CD4-positive, alpha-beta memory T cell (primary cell): ENCODE measurements at regions of chr13 and their contacts with region 1.

Region 1: GRCh38 chr13:41054212-41054877 is 7.0 kb upstream of the WBP4 start:
- DNase-seq: peak; percentile 50 to 60 (median 56)
- H3K4me3 ChIP-seq: no peak overlapping the region
- H3K4me3 Mint-ChIP-seq: peak overlapping the region in 3 of 8 donors; percentile 27 to 73 (median 31)
- H3K27ac ChIP-seq: no peak overlapping the region
- H3K27ac Mint-ChIP-seq: peak overlapping the region in 4 of 7 donors; percentile 8 to 40 (median 22)
- H3K4me1 ChIP-seq: peaks cover 32% of the 10 kb centered on the region
- H3K4me1 Mint-ChIP-seq: peaks cover 30 to 50% (median 35%) of the 10 kb centered on the region in 4 donors
- H3K27me3 ChIP-seq: no peaks in the 10 kb centered on the region
- H3K27me3 Mint-ChIP-seq: no peaks in the 10 kb centered on the region

Region 2: DNA sequence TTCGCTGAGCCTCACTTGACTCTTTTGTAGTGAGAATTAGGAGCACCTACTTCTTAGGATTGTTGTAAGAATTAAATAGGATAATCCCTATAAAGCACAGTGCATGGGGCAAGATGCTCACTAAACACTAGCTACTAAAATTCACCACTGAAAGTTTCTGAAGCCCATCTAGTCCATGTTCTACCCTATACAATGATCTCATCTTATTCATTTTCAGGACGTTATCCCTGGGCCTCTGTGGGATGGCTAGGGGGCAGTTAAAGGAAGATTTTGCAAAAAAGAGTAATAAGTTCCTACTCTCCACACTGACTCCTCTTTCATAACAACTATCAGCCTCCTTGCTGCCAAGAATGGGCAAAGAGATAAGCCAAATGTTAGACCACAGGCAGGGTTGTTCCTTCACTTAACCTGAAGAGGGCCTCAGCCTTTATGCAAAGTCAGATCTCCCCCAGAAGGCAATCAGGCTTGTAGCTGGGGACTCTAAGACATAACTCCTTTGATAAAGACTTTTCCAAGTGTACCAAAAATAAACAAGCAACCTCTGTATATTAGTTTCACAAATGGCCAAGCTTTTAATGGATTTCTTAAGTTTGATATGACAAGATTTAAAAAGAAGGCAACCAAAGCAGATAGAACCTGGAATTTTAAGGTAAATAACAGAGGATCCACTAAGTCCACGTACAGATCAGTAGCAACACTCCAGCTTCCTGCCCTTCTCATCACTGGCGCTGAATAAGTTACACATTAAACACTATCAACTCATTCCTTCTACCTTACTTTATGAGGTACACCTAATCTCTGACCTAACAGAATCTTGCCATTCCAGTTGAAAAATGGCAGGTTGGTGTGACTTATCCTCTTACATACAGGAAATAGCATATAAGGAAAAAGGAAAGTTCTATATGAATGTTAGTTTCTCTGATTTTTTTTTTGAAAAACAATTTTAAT is 79.6 kb before region 1 on chr13:
- CTCF ChIA-PET with region 1: interaction called, 30 read pairs
- POLR2A ChIA-PET with region 1: interaction called, 48 read pairs
- intact Hi-C with region 1: loop called (anchors 1 kb)
- DNase-seq: peak; percentile 54 to 75 (median 61)
- H3K4me3 ChIP-seq: no peak overlapping the region
- H3K4me3 Mint-ChIP-seq: peak overlapping the region; percentile 43 to 97 (median 78)
- H3K27ac ChIP-seq: peak overlapping the region; percentile 19
- H3K27ac Mint-ChIP-seq: peak overlapping the region; percentile 84 to 98 (median 86)
- H3K4me1 ChIP-seq: peaks cover 85% of the 10 kb centered on the region
- H3K4me1 Mint-ChIP-seq: peaks cover 68 to 94% (median 80%) of the 10 kb centered on the region in 4 donors
- H3K27me3 ChIP-seq: no peaks in the 10 kb centered on the region
- H3K27me3 Mint-ChIP-seq: no peaks in the 10 kb centered on the region

Region 3: DNA sequence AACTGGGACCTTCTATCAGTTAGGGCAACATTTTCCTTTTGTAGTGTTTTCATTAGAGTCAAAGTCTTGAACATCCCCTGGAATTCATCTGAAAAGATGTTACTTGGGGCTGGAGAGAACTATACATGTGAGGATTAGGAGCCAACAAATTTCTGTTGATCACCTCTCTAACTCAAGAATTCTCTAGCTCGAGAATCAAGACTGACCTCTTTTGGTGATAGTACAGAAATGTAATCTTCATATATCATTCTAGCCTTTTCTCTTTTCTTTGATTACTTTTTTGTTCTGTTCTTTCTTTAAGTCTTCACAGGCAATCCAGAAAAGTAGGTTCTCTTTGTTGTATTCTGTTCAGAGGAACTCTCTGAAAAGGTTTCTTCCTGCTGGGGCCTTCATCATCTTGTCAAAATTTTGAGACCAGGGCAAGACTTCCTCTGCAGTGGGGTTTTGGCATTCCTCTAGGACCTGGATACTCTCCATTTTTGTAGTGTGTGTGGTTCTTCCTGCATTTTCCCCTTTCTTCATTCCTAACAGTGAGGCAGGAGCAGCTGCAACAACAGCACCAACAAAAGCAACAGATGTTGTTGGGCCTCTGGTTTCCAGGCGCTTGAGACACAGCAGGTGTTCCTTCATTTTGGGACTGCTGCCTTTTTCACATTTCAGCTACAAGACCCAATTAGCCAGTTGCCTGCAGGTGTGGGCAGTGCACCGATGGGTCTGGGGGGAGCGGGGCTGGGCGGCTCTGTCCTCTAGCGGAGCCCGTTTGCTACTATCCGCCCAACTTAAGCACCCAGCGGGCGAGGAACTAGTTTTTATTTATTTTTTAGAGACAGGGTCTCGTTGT is 61.4 kb before region 1 on chr13:
- CTCF ChIA-PET with region 1: interaction called, 12 read pairs
- POLR2A ChIA-PET with region 1: no interaction called
- intact Hi-C with region 1: no loop called
- DNase-seq: no peak
- H3K4me3 ChIP-seq: no peak overlapping the region
- H3K4me3 Mint-ChIP-seq: peak overlapping the region in 6 of 8 donors; percentile 9 to 65 (median 35)
- H3K27ac ChIP-seq: peak overlapping the region; percentile 41
- H3K27ac Mint-ChIP-seq: peak overlapping the region; percentile 65 to 94 (median 85)
- H3K4me1 ChIP-seq: peaks cover 93% of the 10 kb centered on the region
- H3K4me1 Mint-ChIP-seq: peaks cover 54 to 87% (median 69%) of the 10 kb centered on the region in 4 donors
- H3K27me3 ChIP-seq: no peaks in the 10 kb centered on the region
- H3K27me3 Mint-ChIP-seq: no peaks in the 10 kb centered on the region

Region 4: DNA sequence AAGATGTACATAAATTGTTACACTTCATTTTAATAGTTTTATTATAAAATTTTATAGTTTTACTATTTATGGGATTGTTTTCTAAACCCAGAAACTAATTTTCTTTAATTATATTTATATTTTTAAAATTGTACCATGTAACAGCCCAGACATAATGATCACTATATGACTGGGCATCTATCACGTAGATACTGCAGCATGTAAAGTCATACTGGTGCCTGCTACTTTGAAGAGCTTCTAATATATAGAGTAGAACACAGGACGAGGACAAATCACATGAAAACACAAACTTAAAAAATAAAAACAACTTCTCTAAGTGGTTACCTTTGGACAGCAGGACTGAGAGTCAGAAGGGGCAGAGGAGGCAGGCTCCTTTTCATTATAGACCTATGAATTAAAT is 40.5 kb before region 1 on chr13:
- CTCF ChIA-PET with region 1: interaction called, 48 read pairs
- POLR2A ChIA-PET with region 1: interaction called, 104 read pairs
- intact Hi-C with region 1: no loop called
- DNase-seq: no peak
- H3K4me3 ChIP-seq: no peak overlapping the region
- H3K4me3 Mint-ChIP-seq: peak overlapping the region; percentile 77 to 94 (median 92)
- H3K27ac ChIP-seq: peak overlapping the region; percentile 32
- H3K27ac Mint-ChIP-seq: peak overlapping the region; percentile 47 to 93 (median 89)
- H3K4me1 ChIP-seq: peaks cover 68% of the 10 kb centered on the region
- H3K4me1 Mint-ChIP-seq: peaks cover 37 to 68% (median 47%) of the 10 kb centered on the region in 4 donors
- H3K27me3 ChIP-seq: no peaks in the 10 kb centered on the region
- H3K27me3 Mint-ChIP-seq: no peaks in the 10 kb centered on the region

Region 5: DNA sequence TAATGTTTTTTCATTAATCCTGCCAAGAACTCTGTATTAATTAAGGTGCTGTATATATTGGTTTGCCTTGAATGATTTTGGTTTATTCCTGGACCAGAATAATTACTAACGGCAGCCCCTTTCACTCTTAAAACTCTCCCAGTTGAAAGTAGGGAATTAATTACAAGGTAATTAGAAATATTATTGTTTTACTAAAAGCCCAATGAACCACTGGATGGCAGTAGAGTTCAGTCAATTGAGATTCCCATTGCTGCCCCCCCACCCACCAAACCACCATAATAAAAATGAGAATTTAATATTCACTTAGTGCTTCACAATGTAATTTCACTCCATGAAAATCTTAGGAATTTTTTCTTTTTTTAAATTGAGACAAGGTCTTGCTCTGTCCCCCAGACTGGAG is 20.7 kb after region 1 on chr13:
- CTCF ChIA-PET with region 1: interaction called, 14 read pairs
- POLR2A ChIA-PET with region 1: no interaction called
- intact Hi-C with region 1: no loop called
- DNase-seq: peak in 4 of 5 donors; percentile 37 to 52 (median 44)
- H3K4me3 ChIP-seq: no peak overlapping the region
- H3K4me3 Mint-ChIP-seq: no peak overlapping the region
- H3K27ac ChIP-seq: no peak overlapping the region
- H3K27ac Mint-ChIP-seq: no peak overlapping the region
- H3K4me1 ChIP-seq: no peaks in the 10 kb centered on the region
- H3K4me1 Mint-ChIP-seq: no peaks in the 10 kb centered on the region
- H3K27me3 ChIP-seq: no peaks in the 10 kb centered on the region
- H3K27me3 Mint-ChIP-seq: no peaks in the 10 kb centered on the region

Region 6: DNA sequence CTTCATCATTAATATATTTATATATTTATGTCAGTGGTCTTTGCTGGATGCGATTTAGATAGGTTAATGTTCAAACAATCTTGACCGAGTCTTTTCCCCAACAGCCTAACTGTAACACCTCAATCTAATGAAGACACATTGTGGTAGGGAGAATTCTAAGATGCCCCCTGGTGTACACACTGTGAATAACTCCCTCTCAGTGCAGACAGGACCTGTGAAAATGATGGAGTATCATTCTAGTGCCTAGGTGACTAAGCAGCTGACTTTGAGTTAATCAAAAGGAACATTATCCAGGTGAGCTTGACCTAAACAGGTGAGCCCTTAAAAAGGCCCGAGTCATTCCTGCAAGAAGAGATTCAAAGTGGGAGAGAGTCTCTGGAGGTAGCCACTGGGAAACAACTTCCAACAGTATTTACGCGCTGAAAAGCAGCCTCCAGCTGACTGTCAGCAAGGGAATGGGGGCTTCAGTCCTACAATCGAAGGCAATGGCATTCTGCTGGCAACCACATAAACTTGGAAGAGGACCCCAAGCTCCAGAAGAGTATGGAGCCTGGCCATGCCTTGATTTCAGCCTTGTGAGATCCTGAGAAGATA is 168.0 kb after region 1 on chr13:
- CTCF ChIA-PET with region 1: interaction called, 26 read pairs
- POLR2A ChIA-PET with region 1: no interaction called
- intact Hi-C with region 1: loop called (anchors 1 kb)
- DNase-seq: peak; percentile 45 to 52 (median 50)
- H3K4me3 ChIP-seq: no peak overlapping the region
- H3K4me3 Mint-ChIP-seq: no peak overlapping the region
- H3K27ac ChIP-seq: no peak overlapping the region
- H3K27ac Mint-ChIP-seq: no peak overlapping the region
- H3K4me1 ChIP-seq: no peaks in the 10 kb centered on the region
- H3K4me1 Mint-ChIP-seq: peaks cover 0 to 2% (median 0%) of the 10 kb centered on the region in 4 donors
- H3K27me3 ChIP-seq: no peaks in the 10 kb centered on the region
- H3K27me3 Mint-ChIP-seq: no peaks in the 10 kb centered on the region